Ovary (tissue), 10 donors: ENCODE measurements at regions of chr11 and their contacts with region 1.

Region 1: DNA sequence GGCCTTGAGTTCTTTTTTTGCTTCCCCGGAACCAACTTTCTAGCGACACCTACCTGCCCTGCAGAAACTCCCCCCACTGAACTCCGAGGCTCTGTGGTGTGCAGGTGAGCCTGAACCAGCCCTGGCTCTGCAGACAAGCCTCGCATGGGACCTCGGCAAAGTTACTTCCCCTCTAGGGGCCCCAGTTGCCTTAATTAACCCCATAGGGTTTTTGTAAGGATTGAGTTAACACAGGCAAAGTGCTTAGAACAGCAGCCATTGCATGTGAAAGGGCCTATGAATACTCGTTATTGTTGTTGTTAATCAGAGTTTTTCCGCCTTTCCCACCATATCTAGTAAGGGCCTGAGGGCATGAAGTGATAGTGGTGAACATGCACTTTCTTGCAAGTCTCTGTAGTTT is 12.6 kb upstream of the SYT13 start:
- DNase-seq: no peak
- H3K4me3 ChIP-seq: no peak overlapping the region
- H3K27ac ChIP-seq: no peak overlapping the region
- H3K4me1 ChIP-seq: no peaks in the 10 kb centered on the region
- H3K27me3 ChIP-seq: no peaks in the 10 kb centered on the region
- CTCF ChIP-seq: no peak
- EP300 ChIP-seq: no peak
- POLR2A ChIP-seq: no peak

Region 2: DNA sequence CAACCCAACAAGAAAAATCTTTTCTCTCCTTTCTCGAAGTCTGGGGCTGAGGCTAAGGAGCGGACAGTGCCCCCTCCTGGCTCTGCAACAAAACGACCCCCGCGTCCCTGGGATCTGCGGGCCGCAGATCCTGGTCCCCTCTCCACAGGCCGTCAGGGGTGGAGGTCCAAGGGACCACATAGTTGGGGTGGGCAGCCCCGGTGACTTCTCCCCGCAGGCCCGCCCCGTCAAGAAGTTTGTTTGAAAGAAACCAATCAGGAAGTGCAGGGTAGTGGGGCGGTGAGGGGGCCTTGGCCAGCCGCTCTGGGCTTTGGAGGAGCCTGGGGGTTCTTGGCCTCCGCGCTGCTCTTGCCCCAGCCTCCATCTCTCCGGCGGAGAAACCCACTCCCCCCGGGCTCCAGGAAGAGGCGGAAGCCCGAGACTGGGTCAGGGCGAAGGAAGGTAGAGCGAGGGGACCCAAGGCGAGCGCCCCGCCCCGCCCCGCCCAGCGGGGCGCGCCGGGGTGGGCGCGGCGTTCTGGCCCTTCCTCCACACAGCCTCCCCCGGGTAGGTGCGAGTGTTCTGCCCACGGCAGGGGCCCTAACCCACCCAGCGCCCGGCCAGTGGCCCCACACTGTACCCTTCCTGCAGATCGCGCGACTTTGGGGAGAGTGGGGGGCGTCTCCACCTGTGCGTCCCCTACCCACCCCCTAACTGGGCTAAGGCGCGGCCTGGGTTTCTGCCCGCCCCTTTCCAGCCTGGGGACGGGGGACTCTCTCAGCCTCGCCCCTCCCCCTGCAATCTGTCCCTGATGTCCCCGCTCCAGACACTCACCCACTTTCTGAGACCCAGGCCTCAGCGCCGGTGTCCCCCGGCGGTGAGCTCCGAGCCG is 349.3 kb before region 1 on chr11:
- intact Hi-C with region 1: loop called in 1 of 4 experiments (anchors 10 kb)
- DNase-seq: peak in 2 of 5 donors; percentile 28 to 43
- H3K4me3 ChIP-seq: peak overlapping the region; percentile 73
- H3K27ac ChIP-seq: peak overlapping the region in 1 of 2 donors; percentile 49
- H3K4me1 ChIP-seq: no peaks in the 10 kb centered on the region
- H3K27me3 ChIP-seq: no peaks in the 10 kb centered on the region
- CTCF ChIP-seq: no peak
- EP300 ChIP-seq: no peak
- POLR2A ChIP-seq: no peak

Region 3: GRCh38 chr11:45102810-45103621 is 195.7 kb before region 1 on chr11:
- intact Hi-C with region 1: loop called in 1 of 4 experiments (anchors 5 kb)
- DNase-seq: peak in 3 of 5 donors; percentile 40 to 46 (median 43)
- H3K4me3 ChIP-seq: no peak overlapping the region
- H3K27ac ChIP-seq: no peak overlapping the region
- H3K4me1 ChIP-seq: no peaks in the 10 kb centered on the region
- H3K27me3 ChIP-seq: no peaks in the 10 kb centered on the region
- CTCF ChIP-seq: peak; percentile 58 to 83 (median 79)
- EP300 ChIP-seq: no peak
- POLR2A ChIP-seq: no peak

Region 4: DNA sequence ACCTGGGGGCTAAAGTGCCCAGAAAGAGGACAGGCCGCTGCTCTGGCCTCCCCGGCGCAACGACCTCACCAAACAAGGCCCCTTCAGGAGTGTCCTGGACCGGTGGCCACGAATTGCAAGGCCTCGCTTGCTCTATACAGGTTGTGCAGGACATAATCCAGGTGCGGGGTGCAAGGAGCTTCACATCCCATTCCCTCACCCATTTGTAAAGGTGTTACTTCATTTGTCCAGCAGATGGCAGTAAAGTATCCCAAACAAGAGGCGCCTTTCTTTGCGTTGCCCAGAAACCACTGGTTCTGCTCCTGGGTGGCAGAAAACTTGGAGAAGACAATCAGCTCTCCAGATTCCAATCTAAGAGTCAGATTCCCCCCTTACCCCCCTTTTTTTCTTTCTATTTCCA is 188.2 kb before region 1 on chr11:
- intact Hi-C with region 1: loop called (anchors 2 to 5 kb)
- DNase-seq: peak in 2 of 5 donors; percentile 23 to 55
- H3K4me3 ChIP-seq: no peak overlapping the region
- H3K27ac ChIP-seq: no peak overlapping the region
- H3K4me1 ChIP-seq: no peaks in the 10 kb centered on the region
- H3K27me3 ChIP-seq: no peaks in the 10 kb centered on the region
- CTCF ChIP-seq: peak; percentile 56 to 82 (median 82)
- EP300 ChIP-seq: no peak
- POLR2A ChIP-seq: no peak